A673 (cell line): ENCODE measurements at regions of chr15 and their contacts with region 1.

Region 1: DNA sequence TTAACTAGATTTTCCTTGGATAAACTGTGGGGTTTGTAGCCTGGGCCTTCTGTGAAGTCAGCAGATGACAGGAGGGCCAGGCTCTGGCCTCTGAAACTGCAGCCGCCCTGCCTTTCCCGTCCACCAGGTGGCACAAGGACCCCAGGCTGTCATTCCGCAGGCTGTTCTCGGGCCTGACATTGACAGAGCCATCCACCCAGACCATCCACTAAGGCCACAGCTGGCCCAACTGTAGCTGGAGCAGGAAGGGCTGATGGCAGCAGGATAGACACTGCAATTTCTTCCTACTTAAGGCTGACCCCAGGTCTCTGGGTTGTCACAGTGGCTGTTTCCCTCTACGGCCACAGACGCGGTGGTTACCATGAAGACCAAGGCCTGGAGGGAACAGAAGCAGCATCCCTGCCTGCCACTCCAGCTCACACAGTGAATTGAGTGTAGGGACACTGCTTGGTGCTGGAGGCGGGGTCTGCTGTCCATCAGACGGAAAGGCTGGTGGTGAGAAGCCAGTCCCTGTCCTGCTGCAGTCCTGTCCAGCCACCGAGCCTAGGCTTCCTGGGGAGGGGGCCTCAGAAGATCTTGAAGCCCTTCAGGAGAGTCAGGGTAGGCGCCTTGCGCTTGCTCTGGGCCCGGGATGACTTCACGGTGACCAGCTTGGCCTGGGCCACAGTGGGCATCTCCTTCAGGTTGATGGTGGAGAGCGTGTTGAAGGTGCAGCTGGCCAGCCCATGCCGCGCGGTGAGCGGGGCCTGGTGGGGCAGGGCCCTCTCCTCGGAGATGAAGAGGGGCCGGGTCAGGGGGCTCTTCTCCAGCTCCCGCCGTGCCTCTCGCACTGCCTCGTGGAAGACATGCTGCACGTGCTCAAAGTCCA is 9.4 kb downstream of the SLC51B start:
- DNase-seq: peak; percentile 72
- H3K4me3 ChIP-seq: no peak overlapping the region
- H3K27ac ChIP-seq: no peak overlapping the region
- H3K4me1 ChIP-seq: peaks cover 4% of the 10 kb centered on the region
- H3K27me3 ChIP-seq: no peaks in the 10 kb centered on the region
- CTCF ChIP-seq: peak; percentile 88

Region 2: DNA sequence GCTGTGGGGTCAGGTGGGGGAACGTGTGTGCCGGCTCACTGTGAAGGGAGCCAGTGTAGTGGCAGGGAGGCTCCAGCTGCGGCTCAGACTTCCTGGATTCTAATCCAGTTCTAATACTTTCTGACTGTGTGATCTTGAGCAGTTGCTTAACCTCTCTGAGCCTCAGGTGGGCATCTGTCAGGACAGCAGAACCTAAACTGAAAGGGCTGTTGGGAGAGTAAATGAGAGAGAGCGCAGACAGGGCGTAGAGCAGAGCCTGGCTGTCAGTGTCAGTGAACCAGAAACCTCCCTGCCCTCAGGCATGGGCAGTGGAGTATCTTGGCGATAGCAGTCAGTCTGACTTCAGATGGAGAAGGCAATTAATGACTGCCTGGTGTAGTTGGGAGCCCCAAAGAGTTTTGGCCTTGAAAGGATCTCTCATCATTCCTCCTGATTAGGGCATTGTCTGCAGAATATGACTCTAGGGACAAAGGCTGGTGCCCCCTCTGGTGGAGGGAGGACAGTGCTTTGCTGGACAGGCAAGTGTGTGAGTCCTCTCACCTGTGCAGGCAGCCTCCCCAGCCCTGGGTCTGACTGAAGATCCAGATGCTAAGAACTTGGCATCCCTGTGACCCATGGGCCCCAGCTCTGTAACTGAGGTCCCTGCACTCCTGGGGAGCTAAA is 31.6 kb after region 1 on chr15:
- CTCF ChIA-PET with region 1: interaction called, 3 read pairs
- POLR2A ChIA-PET with region 1: no interaction called
- intact Hi-C with region 1: loop called (anchors 5 kb)
- DNase-seq: no peak
- H3K4me3 ChIP-seq: no peak overlapping the region
- H3K27ac ChIP-seq: no peak overlapping the region
- H3K4me1 ChIP-seq: no peaks in the 10 kb centered on the region
- H3K27me3 ChIP-seq: no peaks in the 10 kb centered on the region
- CTCF ChIP-seq: peak; percentile 20; the same call in 1 of the 2 replicates

Region 3: DNA sequence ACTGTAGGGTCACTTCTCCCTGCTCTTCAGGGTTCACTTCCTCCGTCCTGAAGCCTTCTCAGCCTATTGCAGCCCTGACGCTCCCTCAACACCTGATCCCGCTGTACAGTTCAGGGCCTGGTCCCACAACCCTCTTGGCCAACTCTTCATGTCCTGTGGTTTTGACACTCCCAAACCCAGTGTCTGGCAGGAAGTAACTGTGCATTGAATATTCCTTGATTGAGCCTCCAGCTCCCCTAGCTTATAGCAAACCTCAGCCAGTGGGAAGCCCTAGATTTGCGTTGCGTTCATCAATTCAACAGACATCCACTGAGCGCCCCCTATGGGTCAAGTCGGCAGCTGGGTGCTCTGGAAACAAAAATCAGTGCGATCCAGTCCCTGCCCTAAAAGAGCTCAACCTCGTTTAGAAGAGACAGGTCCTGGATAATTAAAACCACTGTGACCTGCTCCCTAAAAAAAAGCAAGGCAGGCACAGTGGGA is 46.9 kb after region 1 on chr15:
- CTCF ChIA-PET with region 1: interaction called, 12 read pairs
- POLR2A ChIA-PET with region 1: no interaction called
- intact Hi-C with region 1: loop called (anchors 1 kb)
- DNase-seq: peak; percentile 80
- H3K4me3 ChIP-seq: no peak overlapping the region
- H3K27ac ChIP-seq: no peak overlapping the region
- H3K4me1 ChIP-seq: no peaks in the 10 kb centered on the region
- H3K27me3 ChIP-seq: no peaks in the 10 kb centered on the region
- CTCF ChIP-seq: peak; percentile 96

Region 4: DNA sequence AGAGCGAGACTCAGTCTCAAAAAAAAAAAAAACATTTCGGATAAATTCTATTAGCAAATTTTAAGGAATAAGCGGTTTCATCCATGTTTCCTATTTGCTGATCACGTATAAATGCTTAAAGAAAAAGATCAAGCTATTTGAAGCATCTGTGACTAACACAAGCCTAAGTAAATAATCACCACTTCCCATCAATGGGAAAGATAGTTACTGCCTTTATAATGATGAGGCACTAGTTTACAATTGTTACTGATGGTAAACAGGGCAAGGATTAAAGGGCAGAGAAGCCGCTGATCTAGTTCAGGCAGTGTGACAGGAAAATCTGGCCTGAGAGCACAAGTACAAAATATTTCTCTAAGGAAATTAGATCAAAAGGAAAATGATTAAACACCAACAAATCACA is 116.9 kb after region 1 on chr15:
- CTCF ChIA-PET with region 1: no interaction called
- POLR2A ChIA-PET with region 1: no interaction called
- intact Hi-C with region 1: no loop called
- DNase-seq: no peak
- H3K4me3 ChIP-seq: no peak overlapping the region
- H3K27ac ChIP-seq: no peak overlapping the region
- H3K4me1 ChIP-seq: no peaks in the 10 kb centered on the region
- H3K27me3 ChIP-seq: no peaks in the 10 kb centered on the region
- CTCF ChIP-seq: no peak

Region 5: GRCh38 chr15:65298731-65299130 is 244.2 kb after region 1 on chr15:
- CTCF ChIA-PET with region 1: no interaction called
- POLR2A ChIA-PET with region 1: no interaction called
- intact Hi-C with region 1: loop called (anchors 5 kb)
- DNase-seq: no peak
- H3K4me3 ChIP-seq: no peak overlapping the region
- H3K27ac ChIP-seq: no peak overlapping the region
- H3K4me1 ChIP-seq: peaks cover 10% of the 10 kb centered on the region
- H3K27me3 ChIP-seq: no peaks in the 10 kb centered on the region
- CTCF ChIP-seq: no peak

Region 6: GRCh38 chr15:65336493-65337455 is 282.2 kb after region 1 on chr15:
- CTCF ChIA-PET with region 1: no interaction called
- POLR2A ChIA-PET with region 1: no interaction called
- intact Hi-C with region 1: no loop called
- DNase-seq: peak; percentile 17
- H3K4me3 ChIP-seq: no peak overlapping the region
- H3K27ac ChIP-seq: no peak overlapping the region
- H3K4me1 ChIP-seq: peaks cover 20% of the 10 kb centered on the region
- H3K27me3 ChIP-seq: no peaks in the 10 kb centered on the region
- CTCF ChIP-seq: no peak